MCF 10A (cell line): ENCODE measurements at regions of chr15 and their contacts with region 1.

Region 1: GRCh38 chr15:69413822-69414700 is at the start of gene KIF23:
- DNase-seq: peak; percentile 95
- H3K4me3 Mint-ChIP-seq: peak within 1 kb of the TSS; percentile 80
- H3K27ac Mint-ChIP-seq: peak within 1 kb of the TSS; percentile 88
- H3K4me1 Mint-ChIP-seq: peaks cover 13% of the 10 kb centered on the region
- H3K27me3 Mint-ChIP-seq: no peaks in the 10 kb centered on the region
- CTCF ChIP-seq: no peak
- total RNA-seq, gene KIF23: 30.3 and 50.2 TPM in 2 replicates

Region 2: GRCh38 chr15:69160141-69160993 is 253.7 kb before region 1 on chr15 and contains the start of gene GLCE:
- CTCF ChIA-PET with region 1: interaction called, 3 read pairs
- POLR2A ChIA-PET with region 1: interaction called, 10 read pairs
- intact Hi-C with region 1: loop called (anchors 1 kb)
- DNase-seq: peak; percentile 98
- H3K4me3 Mint-ChIP-seq: peak within 1 kb of the TSS; percentile 97
- H3K27ac Mint-ChIP-seq: peak within 1 kb of the TSS; percentile 96
- H3K4me1 Mint-ChIP-seq: peaks cover 26% of the 10 kb centered on the region
- H3K27me3 Mint-ChIP-seq: no peaks in the 10 kb centered on the region
- CTCF ChIP-seq: no peak
- total RNA-seq, gene GLCE: 7.5 and 8.3 TPM in 2 replicates

Region 3: DNA sequence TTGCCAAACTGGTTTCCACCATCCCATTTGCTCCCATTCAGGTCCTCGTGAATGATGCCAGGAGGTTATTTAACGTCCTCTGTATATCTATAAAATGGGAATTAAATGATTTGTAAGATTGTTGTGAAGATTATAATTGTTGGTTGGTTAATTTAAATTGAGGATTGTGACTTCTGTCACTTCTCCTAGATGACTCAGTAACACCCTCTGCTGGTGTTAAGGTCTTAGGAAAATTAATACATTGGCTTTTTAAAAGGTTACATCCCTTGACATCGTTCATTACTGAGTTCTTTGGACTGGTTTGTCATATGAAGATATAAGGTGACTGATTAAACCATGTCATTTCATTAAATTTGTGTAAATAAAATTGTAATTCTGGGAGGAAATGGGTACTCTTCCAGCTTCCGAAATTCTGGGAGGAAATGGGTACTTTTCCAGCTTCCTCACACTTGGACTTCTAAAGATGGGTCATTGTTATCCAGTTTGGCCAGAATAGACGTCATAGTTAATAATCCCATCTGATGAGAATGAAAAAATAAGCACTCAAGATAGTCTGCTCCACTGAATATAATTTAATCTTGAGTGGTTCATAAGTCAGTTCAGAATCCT is 148.6 kb before region 1 on chr15:
- CTCF ChIA-PET with region 1: interaction called, 3 read pairs
- POLR2A ChIA-PET with region 1: interaction called, 3 read pairs
- intact Hi-C with region 1: loop called (anchors 2 kb)
- DNase-seq: peak; percentile 63
- H3K4me3 Mint-ChIP-seq: no peak overlapping the region
- H3K27ac Mint-ChIP-seq: no peak overlapping the region
- H3K4me1 Mint-ChIP-seq: no peaks in the 10 kb centered on the region
- H3K27me3 Mint-ChIP-seq: no peaks in the 10 kb centered on the region
- CTCF ChIP-seq: peak; percentile 65

Region 4: GRCh38 chr15:69394556-69395282 is 19.3 kb before region 1 on chr15:
- CTCF ChIA-PET with region 1: interaction called, 54 read pairs
- POLR2A ChIA-PET with region 1: interaction called, 4 read pairs
- intact Hi-C with region 1: loop called (anchors 1 kb)
- DNase-seq: peak; percentile 72
- H3K4me3 Mint-ChIP-seq: no peak overlapping the region
- H3K27ac Mint-ChIP-seq: no peak overlapping the region
- H3K4me1 Mint-ChIP-seq: peaks cover 27% of the 10 kb centered on the region
- H3K27me3 Mint-ChIP-seq: no peaks in the 10 kb centered on the region
- CTCF ChIP-seq: peak; percentile 95

Region 5: GRCh38 chr15:69462493-69463181 is 48.6 kb after region 1 on chr15:
- CTCF ChIA-PET with region 1: interaction called, 5 read pairs
- POLR2A ChIA-PET with region 1: interaction called, 32 read pairs
- intact Hi-C with region 1: no loop called
- DNase-seq: peak; percentile 98
- H3K4me3 Mint-ChIP-seq: peak overlapping the region; percentile 83
- H3K27ac Mint-ChIP-seq: peak overlapping the region; percentile 93
- H3K4me1 Mint-ChIP-seq: peaks cover 10% of the 10 kb centered on the region
- H3K27me3 Mint-ChIP-seq: no peaks in the 10 kb centered on the region
- CTCF ChIP-seq: peak; percentile 83